ENCODE measurements at regions of chr3 and their contacts with region 1.

Region 1: GRCh38 chr3:194893121-194893987 is 207.7 kb downstream of the FAM43A start:
- DNase-seq: no peak
- H3K4me3 ChIP-seq: no peak overlapping the region
- H3K27ac ChIP-seq: no peak overlapping the region
- H3K4me1 ChIP-seq: no peaks in the 10 kb centered on the region
- H3K27me3 ChIP-seq: no peaks in the 10 kb centered on the region
- CTCF ChIP-seq: no peak
- EP300 ChIP-seq: no peak
- POLR2A ChIP-seq: no peak

Region 2: DNA sequence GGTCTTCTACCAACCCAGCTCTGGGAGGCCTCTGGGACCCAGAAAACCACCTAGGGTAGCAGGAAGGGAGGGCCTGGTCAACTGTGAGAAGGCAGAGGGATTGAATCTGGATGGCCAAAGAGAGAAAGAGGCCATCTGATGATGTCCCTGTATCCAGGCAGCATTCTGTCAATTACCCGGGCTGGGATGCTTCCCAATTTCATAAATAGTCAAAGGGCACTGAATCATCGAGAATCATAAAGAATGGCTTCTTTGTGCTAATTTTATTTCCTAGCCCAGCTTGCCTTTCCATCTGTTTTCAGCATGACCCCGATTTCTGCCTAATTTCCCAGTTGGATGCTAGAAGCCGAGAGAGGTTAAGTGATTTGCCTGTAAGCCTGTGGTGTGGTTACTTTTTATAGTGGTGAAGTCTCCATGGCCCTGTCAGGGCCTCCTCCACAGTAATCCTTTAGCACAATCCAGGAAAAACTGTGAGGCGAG is 78.4 kb before region 1 on chr3:
- intact Hi-C with region 1: loop called in 1 of 4 experiments (anchors 10 kb)
- DNase-seq: no peak
- H3K4me3 ChIP-seq: no peak overlapping the region
- H3K27ac ChIP-seq: no peak overlapping the region
- H3K4me1 ChIP-seq: no peaks in the 10 kb centered on the region
- H3K27me3 ChIP-seq: no peaks in the 10 kb centered on the region
- CTCF ChIP-seq: no peak
- EP300 ChIP-seq: no peak
- POLR2A ChIP-seq: no peak

Region 3: GRCh38 chr3:195421393-195421792 is 528.0 kb after region 1 on chr3:
- intact Hi-C with region 1: no loop called
- DNase-seq: no peak
- H3K4me3 ChIP-seq: no peak overlapping the region
- H3K27ac ChIP-seq: no peak overlapping the region
- H3K4me1 ChIP-seq: peaks cover 5% of the 10 kb centered on the region
- H3K27me3 ChIP-seq: no peaks in the 10 kb centered on the region
- CTCF ChIP-seq: no peak
- EP300 ChIP-seq: no peak
- POLR2A ChIP-seq: no peak